ENCODE measurements at regions of chr2 and their contacts with region 1.

Region 1: GRCh38 chr2:54052825-54053718 is 62.3 kb upstream of the ACYP2 start:
- DNase-seq: no peak
- ATAC-seq: peak; percentile 29
- H3K4me3 ChIP-seq: no peak overlapping the region
- H3K27ac ChIP-seq: no peak overlapping the region
- H3K4me1 ChIP-seq: peaks cover 1 to 3% of the 10 kb centered on the region in 2 donors
- H3K27me3 ChIP-seq: no peaks in the 10 kb centered on the region

Region 2: GRCh38 chr2:53913721-53914120 is 139.4 kb before region 1 on chr2:
- intact Hi-C with region 1: no loop called
- DNase-seq: no peak
- ATAC-seq: no peak
- H3K4me3 ChIP-seq: no peak overlapping the region
- H3K27ac ChIP-seq: no peak overlapping the region
- H3K4me1 ChIP-seq: no peaks in the 10 kb centered on the region
- H3K27me3 ChIP-seq: no peaks in the 10 kb centered on the region

Region 3: DNA sequence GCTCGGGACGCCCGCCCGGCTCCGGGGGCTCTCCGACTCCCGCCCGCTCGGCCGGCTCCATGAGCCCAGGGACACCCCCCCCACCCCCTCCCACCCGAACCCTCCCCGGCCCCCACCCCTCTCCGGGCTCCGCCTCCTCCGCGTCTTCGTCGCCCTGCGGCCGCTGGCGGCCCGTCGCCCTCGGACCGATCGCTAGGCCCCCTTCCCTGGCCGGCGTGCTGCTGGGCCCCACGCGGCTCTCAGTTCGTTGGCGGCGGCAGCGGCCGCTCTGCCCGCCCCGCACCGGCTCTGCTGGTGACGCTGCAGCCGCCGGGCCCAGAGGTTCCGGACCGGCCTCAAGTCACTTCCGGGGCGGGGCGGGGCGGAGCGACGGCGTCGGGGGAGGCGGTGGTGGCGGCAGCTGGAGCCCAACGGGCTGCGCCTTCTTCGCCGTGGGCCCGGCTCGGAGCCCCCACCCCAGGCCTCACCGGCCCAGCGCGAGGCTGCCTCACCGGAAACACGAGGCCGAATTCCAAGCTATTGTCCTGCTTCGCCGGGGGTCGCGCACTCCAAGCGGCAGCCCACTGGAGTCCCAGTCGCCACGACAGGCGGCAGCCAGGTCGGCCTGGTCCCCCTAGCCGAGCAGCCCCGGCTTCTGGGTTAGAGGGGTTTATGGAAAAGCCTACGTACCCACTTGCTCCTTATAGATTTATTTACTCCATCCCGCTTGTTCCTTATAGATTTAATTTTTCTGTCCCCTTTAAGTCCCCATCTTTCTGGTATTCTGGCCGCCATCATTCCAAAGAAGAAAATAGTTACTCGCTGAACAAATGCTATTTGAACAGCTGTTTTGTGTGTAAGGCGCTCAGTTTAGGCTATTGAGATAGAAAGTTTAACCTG is 82.1 kb before region 1 on chr2 and contains the start of gene PSME4:
- intact Hi-C with region 1: loop called in 1 of 2 experiments (anchors 5 kb)
- DNase-seq: peak; percentile 97 to 99
- ATAC-seq: peak; percentile 97
- H3K4me3 ChIP-seq: peak within 1 kb of the TSS; percentile 73 to 77
- H3K27ac ChIP-seq: peak within 1 kb of the TSS; percentile 87 to 99
- H3K4me1 ChIP-seq: peaks cover 0 to 5% of the 10 kb centered on the region in 2 donors
- H3K27me3 ChIP-seq: no peaks in the 10 kb centered on the region
- total RNA-seq, gene PSME4: 50.6 to 51.8 TPM